Activated B cell treated with CpG ODN at 0.5 μM for 24 hours (primary cell): ENCODE measurements at regions of chr18 and their contacts with region 1.

Region 1: GRCh38 chr18:22765896-22766295 is 167.2 kb upstream of the RBBP8 start:
- DNase-seq: no peak
- ATAC-seq: no peak
- H3K4me3 Mint-ChIP-seq: no peak overlapping the region
- H3K27ac Mint-ChIP-seq: no peak overlapping the region
- H3K4me1 Mint-ChIP-seq: no peaks in the 10 kb centered on the region
- H3K27me3 Mint-ChIP-seq: peaks cover 7% of the 10 kb centered on the region
- CTCF ChIP-seq: no peak

Region 2: GRCh38 chr18:22783662-22784076 is 17.8 kb after region 1 on chr18:
- CTCF ChIA-PET with region 1: no interaction called
- POLR2A ChIA-PET with region 1: no interaction called
- intact Hi-C with region 1: loop called (anchors 2 kb)
- DNase-seq: no peak
- ATAC-seq: no peak
- H3K4me3 Mint-ChIP-seq: no peak overlapping the region
- H3K27ac Mint-ChIP-seq: no peak overlapping the region
- H3K4me1 Mint-ChIP-seq: no peaks in the 10 kb centered on the region
- H3K27me3 Mint-ChIP-seq: peaks cover 5% of the 10 kb centered on the region
- CTCF ChIP-seq: no peak